ENCODE measurements at regions of chr6 and their contacts with region 1.

Region 1: GRCh38 chr6:63598049-63599036 is 26.1 kb downstream of the LOC128125822 start:
- DNase-seq: peak; percentile 75 to 79 (median 77)
- H3K4me3 ChIP-seq: peak overlapping the region; percentile 67 to 73
- H3K4me3 Mint-ChIP-seq: peak overlapping the region; percentile 68 to 93 (median 86)
- H3K27ac ChIP-seq: no peak overlapping the region
- H3K27ac Mint-ChIP-seq: peak overlapping the region in 4 of 7 donors; percentile 36 to 68 (median 65)
- H3K4me1 ChIP-seq: peaks cover 14% of the 10 kb centered on the region
- H3K4me1 Mint-ChIP-seq: peaks cover 9 to 19% (median 13%) of the 10 kb centered on the region in 4 donors
- H3K27me3 ChIP-seq: no peaks in the 10 kb centered on the region
- H3K27me3 Mint-ChIP-seq: peaks cover 2 to 8% of the 10 kb centered on the region in 2 donors

Region 2: GRCh38 chr6:63571881-63572732 is 26.2 kb before region 1 on chr6 and contains the starts of genes LOC128125822 and PTP4A1:
- CTCF ChIA-PET with region 1: interaction called, 23 read pairs
- POLR2A ChIA-PET with region 1: interaction called, 12 read pairs
- intact Hi-C with region 1: loop called (anchors 1 kb)
- DNase-seq: peak; percentile 95 to 97 (median 97)
- H3K4me3 ChIP-seq: peak within 1 kb of the TSS; percentile 52 to 71
- H3K4me3 Mint-ChIP-seq: peak within 1 kb of the TSS; percentile 89 to 98 (median 96)
- H3K27ac ChIP-seq: peak within 1 kb of the TSS; percentile 92
- H3K27ac Mint-ChIP-seq: peak within 1 kb of the TSS; percentile 95 to 99 (median 97)
- H3K4me1 ChIP-seq: peaks cover 27% of the 10 kb centered on the region
- H3K4me1 Mint-ChIP-seq: peaks cover 21 to 49% (median 28%) of the 10 kb centered on the region in 4 donors
- H3K27me3 ChIP-seq: no peaks in the 10 kb centered on the region
- H3K27me3 Mint-ChIP-seq: peaks cover 0 to 1% of the 10 kb centered on the region in 2 donors
- total RNA-seq, gene PTP4A1: 22.6 to 30.3 TPM

Region 3: DNA sequence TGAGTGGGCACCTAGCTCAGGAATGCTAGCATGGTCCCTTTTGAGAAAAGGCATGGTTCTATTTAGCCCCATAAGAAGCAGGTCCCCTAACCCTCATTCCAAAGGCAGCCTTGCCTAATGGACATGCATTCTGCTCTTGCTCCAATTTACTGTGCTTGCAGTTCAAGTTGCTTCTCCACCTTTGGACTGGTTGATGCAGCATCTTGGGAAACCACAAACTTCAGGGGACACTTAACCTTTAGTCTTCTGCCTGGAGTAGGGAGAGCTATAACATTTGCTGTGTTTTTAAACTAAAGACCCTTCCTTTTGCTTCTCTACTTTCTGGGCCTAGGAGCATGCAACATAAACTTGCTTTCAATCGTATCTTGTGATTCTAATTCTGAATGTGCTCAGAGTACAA is 32.1 kb after region 1 on chr6:
- CTCF ChIA-PET with region 1: interaction called, 28 read pairs
- POLR2A ChIA-PET with region 1: interaction called, 21 read pairs
- intact Hi-C with region 1: loop called (anchors 1 kb)
- DNase-seq: no peak
- H3K4me3 ChIP-seq: no peak overlapping the region
- H3K4me3 Mint-ChIP-seq: no peak overlapping the region
- H3K27ac ChIP-seq: no peak overlapping the region
- H3K27ac Mint-ChIP-seq: no peak overlapping the region
- H3K4me1 ChIP-seq: peaks cover 10% of the 10 kb centered on the region
- H3K4me1 Mint-ChIP-seq: peaks cover 0 to 11% (median 9%) of the 10 kb centered on the region in 4 donors
- H3K27me3 ChIP-seq: no peaks in the 10 kb centered on the region
- H3K27me3 Mint-ChIP-seq: peaks cover 2 to 3% of the 10 kb centered on the region in 2 donors

Region 4: GRCh38 chr6:63689421-63689820 is 91.1 kb after region 1 on chr6:
- CTCF ChIA-PET with region 1: interaction called, 11 read pairs
- POLR2A ChIA-PET with region 1: no interaction called
- intact Hi-C with region 1: loop called (anchors 5 kb)
- DNase-seq: no peak
- H3K4me3 ChIP-seq: no peak overlapping the region
- H3K4me3 Mint-ChIP-seq: no peak overlapping the region
- H3K27ac ChIP-seq: no peak overlapping the region
- H3K27ac Mint-ChIP-seq: no peak overlapping the region
- H3K4me1 ChIP-seq: no peaks in the 10 kb centered on the region
- H3K4me1 Mint-ChIP-seq: peaks cover 7 to 32% (median 18%) of the 10 kb centered on the region in 4 donors
- H3K27me3 ChIP-seq: no peaks in the 10 kb centered on the region
- H3K27me3 Mint-ChIP-seq: no peaks in the 10 kb centered on the region

Region 5: GRCh38 chr6:63750400-63750799 is 152.1 kb after region 1 on chr6:
- CTCF ChIA-PET with region 1: interaction called, 16 read pairs
- POLR2A ChIA-PET with region 1: no interaction called
- intact Hi-C with region 1: no loop called
- DNase-seq: no peak
- H3K4me3 ChIP-seq: no peak overlapping the region
- H3K4me3 Mint-ChIP-seq: no peak overlapping the region
- H3K27ac ChIP-seq: no peak overlapping the region
- H3K27ac Mint-ChIP-seq: no peak overlapping the region
- H3K4me1 ChIP-seq: no peaks in the 10 kb centered on the region
- H3K4me1 Mint-ChIP-seq: no peaks in the 10 kb centered on the region
- H3K27me3 ChIP-seq: no peaks in the 10 kb centered on the region
- H3K27me3 Mint-ChIP-seq: peaks cover 0 to 3% of the 10 kb centered on the region in 2 donors

Region 6: GRCh38 chr6:63774961-63775360 is 176.6 kb after region 1 on chr6:
- CTCF ChIA-PET with region 1: interaction called, 10 read pairs
- POLR2A ChIA-PET with region 1: no interaction called
- intact Hi-C with region 1: no loop called
- DNase-seq: no peak
- H3K4me3 ChIP-seq: no peak overlapping the region
- H3K4me3 Mint-ChIP-seq: no peak overlapping the region
- H3K27ac ChIP-seq: no peak overlapping the region
- H3K27ac Mint-ChIP-seq: no peak overlapping the region
- H3K4me1 ChIP-seq: no peaks in the 10 kb centered on the region
- H3K4me1 Mint-ChIP-seq: no peaks in the 10 kb centered on the region
- H3K27me3 ChIP-seq: no peaks in the 10 kb centered on the region
- H3K27me3 Mint-ChIP-seq: peaks cover 4 to 14% of the 10 kb centered on the region in 2 donors

Region 7: DNA sequence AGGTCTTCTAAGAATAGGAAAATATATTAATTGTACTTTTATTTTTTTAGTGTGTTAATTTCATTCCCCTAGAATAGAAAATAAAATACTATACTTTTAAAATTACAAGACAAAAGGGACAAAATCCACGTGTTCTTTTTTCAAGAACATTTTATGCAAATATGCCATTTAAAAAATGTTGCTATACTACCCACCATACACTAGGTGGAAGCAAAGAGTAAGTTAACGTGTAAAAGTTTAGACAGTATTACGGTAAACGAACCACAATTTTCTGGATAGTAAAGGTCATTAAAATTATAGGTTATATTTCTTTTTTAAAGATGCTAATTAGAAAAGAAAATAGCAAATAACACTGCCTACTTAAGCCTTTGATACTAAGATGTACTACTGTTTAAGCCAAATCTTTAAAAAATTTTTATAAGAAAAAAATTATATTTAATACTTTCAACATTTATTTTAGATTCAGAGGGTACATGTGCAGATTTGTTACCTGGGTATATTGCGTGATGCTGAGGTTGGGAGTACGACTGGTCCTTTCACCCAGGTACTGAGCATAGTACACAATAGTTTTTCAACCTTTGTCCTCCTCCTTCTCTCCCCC is 324.9 kb after region 1 on chr6:
- CTCF ChIA-PET with region 1: no interaction called
- POLR2A ChIA-PET with region 1: no interaction called
- intact Hi-C with region 1: loop called (anchors 5 kb)
- DNase-seq: peak in 4 of 5 donors; percentile 6 to 31 (median 8)
- H3K4me3 ChIP-seq: no peak overlapping the region
- H3K4me3 Mint-ChIP-seq: no peak overlapping the region
- H3K27ac ChIP-seq: no peak overlapping the region
- H3K27ac Mint-ChIP-seq: no peak overlapping the region
- H3K4me1 ChIP-seq: no peaks in the 10 kb centered on the region
- H3K4me1 Mint-ChIP-seq: no peaks in the 10 kb centered on the region
- H3K27me3 ChIP-seq: no peaks in the 10 kb centered on the region
- H3K27me3 Mint-ChIP-seq: peaks cover 1% of the 10 kb centered on the region in 2 donors

Region 8: GRCh38 chr6:65229825-65230224 is 1631.5 kb after region 1 on chr6:
- CTCF ChIA-PET with region 1: no interaction called
- POLR2A ChIA-PET with region 1: no interaction called
- intact Hi-C with region 1: no loop called
- DNase-seq: no peak
- H3K4me3 ChIP-seq: no peak overlapping the region
- H3K4me3 Mint-ChIP-seq: no peak overlapping the region
- H3K27ac ChIP-seq: no peak overlapping the region
- H3K27ac Mint-ChIP-seq: no peak overlapping the region
- H3K4me1 ChIP-seq: no peaks in the 10 kb centered on the region
- H3K4me1 Mint-ChIP-seq: no peaks in the 10 kb centered on the region
- H3K27me3 ChIP-seq: no peaks in the 10 kb centered on the region
- H3K27me3 Mint-ChIP-seq: no peaks in the 10 kb centered on the region